Panc1 (cell line): ENCODE measurements at regions of chr14 and their contacts with region 1.

Region 1: GRCh38 chr14:70555890-70556289 is 21.1 kb upstream of the ADAM20 start:
- DNase-seq: no peak
- ATAC-seq: no peak
- H3K4me3 ChIP-seq: no peak overlapping the region
- H3K27ac ChIP-seq: no peak overlapping the region
- H3K4me1 ChIP-seq: no peaks in the 10 kb centered on the region
- H3K27me3 ChIP-seq: no peaks in the 10 kb centered on the region
- CTCF ChIP-seq: no peak

Region 2: DNA sequence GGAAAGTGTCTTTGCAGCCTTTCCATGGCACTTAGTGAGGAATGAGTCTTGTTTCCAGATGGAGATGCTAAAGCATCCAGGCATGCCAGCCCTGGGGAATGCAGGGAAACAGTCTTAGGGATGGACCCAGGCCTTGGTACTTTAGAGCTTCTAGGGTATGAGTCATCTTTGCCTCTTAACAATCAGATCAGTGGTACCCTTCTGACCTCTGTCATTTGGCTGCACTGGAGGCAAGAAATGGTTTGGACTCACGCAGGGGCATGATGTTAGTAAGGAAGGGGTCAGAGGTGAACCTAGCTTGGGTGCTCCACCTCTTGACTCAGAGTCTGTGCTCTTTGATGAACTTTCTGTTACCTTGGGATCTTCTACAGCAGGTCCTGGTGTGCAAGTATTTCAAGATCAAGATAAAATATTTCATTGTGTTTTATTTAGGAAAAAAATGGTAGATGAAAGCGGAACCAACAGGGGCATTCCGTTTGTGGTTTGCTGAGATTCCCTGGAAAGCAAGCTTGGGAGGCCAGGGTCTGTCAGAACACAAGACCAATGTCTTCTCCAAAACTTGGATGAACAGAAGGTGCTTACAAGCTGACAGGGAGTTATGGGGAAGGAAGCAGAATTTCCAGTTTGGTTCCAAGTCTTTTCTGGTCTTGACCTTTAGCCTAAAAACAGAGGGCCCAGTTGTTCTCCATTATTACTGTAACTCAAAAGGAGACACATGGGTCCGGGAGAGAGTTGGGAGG is 1979.2 kb before region 1 on chr14:
- CTCF ChIA-PET with region 1: no interaction called
- POLR2A ChIA-PET with region 1: no interaction called
- in situ Hi-C with region 1: no loop called
- intact Hi-C with region 1: no loop called
- DNase-seq: no peak
- ATAC-seq: peak; percentile 86
- H3K4me3 ChIP-seq: no peak overlapping the region
- H3K27ac ChIP-seq: peak overlapping the region; percentile 48; the same call in 1 of the 2 replicates
- H3K4me1 ChIP-seq: no peaks in the 10 kb centered on the region; the same call in 1 of the 2 replicates
- H3K27me3 ChIP-seq: no peaks in the 10 kb centered on the region
- CTCF ChIP-seq: no peak

Region 3: DNA sequence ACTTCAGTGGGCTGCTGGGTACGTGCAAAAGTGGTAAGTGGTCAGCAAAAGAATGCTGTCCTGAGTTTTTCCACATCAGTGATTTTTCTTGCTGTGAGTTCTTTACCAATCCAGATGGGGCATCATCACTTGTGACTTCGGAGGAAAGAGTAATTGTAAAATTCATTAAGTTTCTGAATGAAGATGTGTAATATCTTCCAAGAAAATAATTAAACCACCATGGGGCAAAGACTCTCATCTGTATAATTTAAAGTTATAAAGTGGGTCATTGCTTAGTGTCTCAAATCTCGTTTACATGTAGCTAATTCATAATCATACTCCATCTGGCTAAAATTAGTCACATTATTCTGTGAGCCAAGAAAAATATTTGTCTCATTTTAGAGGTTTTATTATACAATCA is 55.3 kb after region 1 on chr14:
- CTCF ChIA-PET with region 1: no interaction called
- POLR2A ChIA-PET with region 1: no interaction called
- in situ Hi-C with region 1: no loop called
- intact Hi-C with region 1: no loop called
- DNase-seq: no peak
- ATAC-seq: no peak
- H3K4me3 ChIP-seq: no peak overlapping the region
- H3K27ac ChIP-seq: no peak overlapping the region
- H3K4me1 ChIP-seq: no peaks in the 10 kb centered on the region
- H3K27me3 ChIP-seq: 0 out of 2 replicates have a peak, but pooled peaks cover 2% of the 10 kb centered on the region
- CTCF ChIP-seq: no peak

Region 4: GRCh38 chr14:71525663-71526221 is 969.9 kb after region 1 on chr14:
- CTCF ChIA-PET with region 1: no interaction called
- POLR2A ChIA-PET with region 1: interaction called, 20 read pairs
- in situ Hi-C with region 1: no loop called
- intact Hi-C with region 1: no loop called
- DNase-seq: no peak
- ATAC-seq: no peak
- H3K4me3 ChIP-seq: no peak overlapping the region
- H3K27ac ChIP-seq: no peak overlapping the region
- H3K4me1 ChIP-seq: no peaks in the 10 kb centered on the region; the same call in 1 of the 2 replicates
- H3K27me3 ChIP-seq: no peaks in the 10 kb centered on the region
- CTCF ChIP-seq: no peak